ENCODE measurements at regions of chr13 and their contacts with region 1.

Region 1: DNA sequence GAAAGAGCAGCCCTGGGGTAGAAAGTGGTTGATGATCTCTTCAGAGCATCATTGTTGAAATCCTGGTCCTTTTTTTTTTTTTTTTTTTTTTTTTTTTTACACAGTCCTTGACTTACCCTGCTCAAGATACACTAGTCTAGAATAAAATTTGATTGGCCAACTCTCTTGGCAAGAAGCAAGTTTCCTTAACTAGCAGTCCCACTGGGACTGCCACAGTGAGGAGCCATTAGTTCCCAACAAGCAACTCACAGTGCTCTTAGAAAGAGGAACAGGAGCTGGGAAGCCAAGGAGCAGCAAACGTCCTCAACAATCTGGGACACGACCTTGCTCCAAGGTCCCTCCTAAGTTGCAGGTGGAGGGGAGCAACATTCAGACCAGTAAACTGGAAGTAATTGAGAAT is 47.9 kb upstream of the INTS6 start:
- DNase-seq: no peak
- ATAC-seq: no peak
- H3K4me3 ChIP-seq: no peak overlapping the region
- H3K4me3 Mint-ChIP-seq: no peak overlapping the region
- H3K27ac ChIP-seq: no peak overlapping the region
- H3K27ac Mint-ChIP-seq: no peak overlapping the region
- H3K4me1 ChIP-seq: no peaks in the 10 kb centered on the region
- H3K4me1 Mint-ChIP-seq: peaks cover 0 to 12% (median 0%) of the 10 kb centered on the region in 3 donors
- H3K27me3 ChIP-seq: no peaks in the 10 kb centered on the region
- H3K27me3 Mint-ChIP-seq: peaks cover 0 to 5% of the 10 kb centered on the region in 2 donors

Region 2: GRCh38 chr13:51668580-51669195 is 168.0 kb after region 1 on chr13:
- CTCF ChIA-PET with region 1: no interaction called
- POLR2A ChIA-PET with region 1: interaction called in 1 of 2 experiments, 14 read pairs
- DNase-seq: no peak
- ATAC-seq: no peak
- H3K4me3 ChIP-seq: no peak overlapping the region
- H3K4me3 Mint-ChIP-seq: no peak overlapping the region
- H3K27ac ChIP-seq: no peak overlapping the region
- H3K27ac Mint-ChIP-seq: no peak overlapping the region
- H3K4me1 ChIP-seq: peaks cover 2 to 3% of the 10 kb centered on the region in 2 experiments
- H3K4me1 Mint-ChIP-seq: peaks cover 32 to 44% (median 41%) of the 10 kb centered on the region in 3 donors
- H3K27me3 ChIP-seq: no peaks in the 10 kb centered on the region
- H3K27me3 Mint-ChIP-seq: no peaks in the 10 kb centered on the region

Measured in T-cell (primary cell).